Activated CD8-positive, alpha-beta memory T cell treated with anti-CD3 and anti-CD28 coated beads, Interleukin-2, amount 10 ng/mL, durations not matched to agents 7 days and 5 days (primary cell): ENCODE measurements at regions of chr16 and their contacts with region 1.

Region 1: DNA sequence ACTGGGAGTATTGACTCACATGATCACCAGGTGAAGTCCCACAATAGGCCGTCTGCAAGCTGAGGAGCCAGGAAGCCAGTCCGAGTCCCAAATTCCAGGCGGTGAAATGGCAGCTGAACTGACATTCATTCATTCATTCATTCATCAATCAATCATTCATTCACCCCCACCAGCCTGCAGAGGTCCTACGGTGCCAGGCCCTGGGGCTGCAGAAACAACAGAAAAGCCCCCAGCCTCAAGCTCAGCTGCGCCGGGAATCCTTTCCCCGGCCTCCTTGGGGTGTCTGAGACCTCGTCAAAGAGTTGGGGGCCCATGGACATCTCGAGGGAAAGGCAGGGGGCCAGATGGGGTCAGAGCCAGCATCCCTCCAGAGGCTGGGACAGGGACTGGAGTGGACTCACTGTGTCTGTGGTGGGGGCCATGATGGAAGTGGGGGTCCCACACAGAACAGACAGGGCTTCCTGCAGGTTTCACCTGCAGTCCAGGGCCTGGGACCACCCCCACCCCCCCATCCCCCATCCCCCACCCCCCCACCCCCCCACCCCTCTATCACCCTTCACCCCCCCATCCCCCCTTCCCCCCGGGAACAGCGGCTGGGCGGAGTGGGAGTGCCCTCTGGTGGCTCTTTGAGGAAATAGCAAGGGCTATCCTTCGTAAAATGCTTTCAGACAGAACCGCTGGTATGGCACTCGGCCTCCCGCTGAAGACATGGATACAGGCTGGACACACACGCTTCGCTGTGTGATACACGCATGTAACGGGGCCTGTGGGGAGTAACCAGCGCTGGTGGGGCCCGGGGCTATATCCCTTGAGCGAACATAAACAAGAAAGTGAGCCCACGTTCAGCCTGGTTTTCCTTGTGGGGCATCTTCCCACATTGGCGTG is 8.5 kb upstream of the ZC3H18 start:
- DNase-seq: peak; percentile 61
- ATAC-seq: peak; percentile 34
- H3K4me3 Mint-ChIP-seq: no peak overlapping the region
- H3K27ac Mint-ChIP-seq: no peak overlapping the region
- H3K4me1 Mint-ChIP-seq: peaks cover 8% of the 10 kb centered on the region
- H3K27me3 Mint-ChIP-seq: peaks cover 7% of the 10 kb centered on the region

Region 2: DNA sequence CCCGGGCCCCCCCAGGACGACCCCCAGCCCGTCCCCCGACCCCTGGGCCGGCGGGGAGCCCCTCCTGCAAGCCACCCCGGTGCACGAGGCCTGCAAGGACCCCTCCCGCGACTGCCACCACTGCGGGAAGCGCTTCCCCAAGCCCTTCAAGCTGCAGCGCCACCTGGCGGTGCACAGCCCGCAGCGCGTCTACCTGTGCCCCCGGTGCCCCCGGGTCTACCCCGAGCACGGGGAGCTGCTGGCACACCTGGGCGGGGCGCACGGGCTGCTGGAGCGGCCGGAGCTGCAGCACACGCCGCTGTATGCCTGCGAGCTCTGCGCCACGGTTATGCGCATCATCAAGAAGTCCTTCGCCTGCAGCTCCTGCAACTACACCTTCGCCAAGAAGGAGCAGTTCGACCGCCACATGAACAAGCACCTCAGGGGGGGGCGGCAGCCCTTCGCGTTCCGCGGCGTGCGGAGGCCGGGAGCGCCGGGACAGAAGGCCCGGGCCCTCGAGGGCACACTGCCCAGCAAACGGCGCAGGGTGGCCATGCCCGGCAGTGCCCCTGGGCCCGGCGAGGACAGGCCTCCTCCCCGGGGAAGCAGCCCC is 124.3 kb before region 1 on chr16:
- CTCF ChIA-PET with region 1: interaction called, 15 read pairs
- DNase-seq: peak; percentile 70
- ATAC-seq: peak; percentile 70
- H3K4me3 Mint-ChIP-seq: no peak overlapping the region
- H3K27ac Mint-ChIP-seq: no peak overlapping the region
- H3K4me1 Mint-ChIP-seq: no peaks in the 10 kb centered on the region
- H3K27me3 Mint-ChIP-seq: no peaks in the 10 kb centered on the region

Region 3: GRCh38 chr16:88442727-88443576 is 118.8 kb before region 1 on chr16:
- CTCF ChIA-PET with region 1: interaction called, 26 read pairs
- DNase-seq: peak; percentile 79
- ATAC-seq: peak; percentile 90
- H3K4me3 Mint-ChIP-seq: no peak overlapping the region
- H3K27ac Mint-ChIP-seq: no peak overlapping the region
- H3K4me1 Mint-ChIP-seq: no peaks in the 10 kb centered on the region
- H3K27me3 Mint-ChIP-seq: no peaks in the 10 kb centered on the region

Region 4: GRCh38 chr16:88539652-88540345 is 21.9 kb before region 1 on chr16:
- CTCF ChIA-PET with region 1: interaction called, 10 read pairs
- DNase-seq: no peak
- ATAC-seq: no peak
- H3K4me3 Mint-ChIP-seq: no peak overlapping the region
- H3K27ac Mint-ChIP-seq: no peak overlapping the region
- H3K4me1 Mint-ChIP-seq: peaks cover 9% of the 10 kb centered on the region
- H3K27me3 Mint-ChIP-seq: no peaks in the 10 kb centered on the region